Posterior vena cava (tissue), 2 donors: ENCODE measurements at regions of chr10 and their contacts with region 1.

Region 1: GRCh38 chr10:451021-451471 is 238.4 kb downstream of the DIP2C start:
- DNase-seq: peak; percentile 63

Region 2: DNA sequence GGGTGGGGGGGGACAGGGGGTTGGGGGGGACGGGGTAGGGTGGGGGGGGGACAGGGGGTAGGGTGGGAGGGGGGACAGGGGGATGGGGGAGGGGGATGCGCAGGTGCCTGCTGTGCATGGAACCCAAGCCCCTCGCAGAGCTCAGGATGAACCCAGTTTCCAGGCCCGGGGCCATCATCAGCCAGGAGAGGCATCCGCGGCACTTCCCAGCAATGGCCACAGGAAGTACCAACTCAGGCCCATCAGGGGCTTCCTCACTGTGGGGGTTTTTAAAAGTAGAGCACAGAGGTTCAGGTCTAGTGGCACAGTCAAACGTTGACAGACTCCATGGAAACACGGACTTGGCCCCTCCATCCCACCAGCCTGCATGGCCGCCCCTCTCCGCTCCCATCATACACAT is 65.7 kb after region 1 on chr10:
- intact Hi-C with region 1: loop called in 1 of 2 experiments (anchors 1 kb)
- DNase-seq: peak; percentile 40